AG04450 (cell line): ENCODE measurements at regions of chr17 and their contacts with region 1.

Region 1: GRCh38 chr17:4215882-4216570 is 47.8 kb downstream of the ANKFY1 start:
- DNase-seq: no peak
- H3K4me3 ChIP-seq: no peak overlapping the region
- H3K27ac ChIP-seq: no peak overlapping the region
- H3K27me3 ChIP-seq: no peaks in the 10 kb centered on the region
- CTCF ChIP-seq: no peak

Region 2: DNA sequence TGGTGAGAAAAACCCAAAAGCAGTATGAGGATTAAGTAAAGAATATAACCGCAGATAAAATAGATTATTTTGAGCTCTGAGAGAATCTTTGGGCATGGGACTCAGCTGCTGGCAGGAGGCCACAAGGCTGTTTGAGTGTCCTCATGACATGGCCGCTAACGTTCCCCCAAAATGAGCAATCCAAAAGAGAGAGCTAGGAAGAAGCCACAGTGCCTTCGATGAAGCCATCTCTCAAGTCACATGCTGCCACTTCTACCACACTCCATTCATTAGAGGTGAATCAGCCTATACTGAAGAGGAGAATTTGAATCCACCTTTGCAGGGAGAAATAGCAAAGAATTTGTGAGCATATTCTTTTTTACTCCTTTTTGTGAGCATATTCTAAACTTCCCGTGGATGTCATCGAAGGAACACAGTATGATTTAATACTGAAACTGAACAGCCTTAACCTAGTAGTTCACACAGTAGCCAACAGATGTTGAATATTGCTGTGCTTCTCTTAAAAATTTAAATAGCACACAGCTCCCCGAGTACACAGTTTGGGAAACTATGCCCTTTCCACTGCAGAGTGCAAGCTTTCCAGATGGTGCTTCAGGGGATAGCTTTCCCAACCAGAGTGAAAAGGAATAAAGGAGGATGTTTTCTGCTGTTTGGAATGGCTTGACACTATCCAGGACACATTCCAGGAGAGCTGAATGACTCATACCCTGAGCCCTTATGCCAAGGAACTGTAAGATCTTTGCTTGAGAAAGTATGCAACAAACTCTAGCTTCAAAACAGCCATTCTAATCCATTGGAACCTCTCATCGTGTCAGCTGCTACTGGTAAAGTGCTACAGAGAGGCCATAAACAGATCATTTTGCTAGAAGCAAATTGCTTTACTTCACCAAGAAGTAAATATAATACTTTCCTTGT is 13.9 kb after region 1 on chr17:
- CTCF ChIA-PET with region 1: interaction called, 11 read pairs
- POLR2A ChIA-PET with region 1: no interaction called
- DNase-seq: peak; percentile 93
- H3K4me3 ChIP-seq: peak overlapping the region; percentile 35
- H3K27ac ChIP-seq: peak overlapping the region; percentile 85
- H3K27me3 ChIP-seq: no peaks in the 10 kb centered on the region
- CTCF ChIP-seq: no peak

Region 3: DNA sequence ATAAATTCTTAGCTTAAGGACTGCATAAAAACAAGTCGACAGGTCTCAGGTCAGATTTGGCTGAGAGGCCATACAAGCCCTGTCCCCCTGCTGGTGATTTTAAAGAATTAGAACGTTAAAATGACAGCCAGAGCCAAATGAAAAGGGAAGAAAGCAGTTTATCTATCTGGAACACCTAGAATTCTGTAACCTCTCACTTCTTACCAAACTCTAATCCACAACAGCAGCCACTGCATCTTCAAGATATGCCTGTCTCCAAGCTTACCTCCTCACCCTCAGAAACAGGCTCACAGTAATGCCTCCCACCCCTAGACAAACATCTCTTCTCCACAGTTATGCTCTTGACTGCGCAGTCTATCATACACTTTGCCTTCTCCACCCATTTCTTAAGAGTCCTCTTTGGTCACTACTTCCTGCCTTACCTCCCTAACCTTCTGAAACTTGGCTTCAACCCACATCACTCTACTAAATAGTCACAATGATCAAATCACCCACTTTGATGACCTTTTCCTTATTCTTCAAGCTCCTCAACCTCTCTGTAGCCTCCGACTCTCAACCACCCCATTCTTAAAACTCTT is 33.5 kb after region 1 on chr17:
- CTCF ChIA-PET with region 1: interaction called, 35 read pairs
- POLR2A ChIA-PET with region 1: no interaction called
- DNase-seq: no peak
- H3K4me3 ChIP-seq: no peak overlapping the region
- H3K27ac ChIP-seq: no peak overlapping the region
- H3K27me3 ChIP-seq: no peaks in the 10 kb centered on the region
- CTCF ChIP-seq: peak; percentile 63

Region 4: DNA sequence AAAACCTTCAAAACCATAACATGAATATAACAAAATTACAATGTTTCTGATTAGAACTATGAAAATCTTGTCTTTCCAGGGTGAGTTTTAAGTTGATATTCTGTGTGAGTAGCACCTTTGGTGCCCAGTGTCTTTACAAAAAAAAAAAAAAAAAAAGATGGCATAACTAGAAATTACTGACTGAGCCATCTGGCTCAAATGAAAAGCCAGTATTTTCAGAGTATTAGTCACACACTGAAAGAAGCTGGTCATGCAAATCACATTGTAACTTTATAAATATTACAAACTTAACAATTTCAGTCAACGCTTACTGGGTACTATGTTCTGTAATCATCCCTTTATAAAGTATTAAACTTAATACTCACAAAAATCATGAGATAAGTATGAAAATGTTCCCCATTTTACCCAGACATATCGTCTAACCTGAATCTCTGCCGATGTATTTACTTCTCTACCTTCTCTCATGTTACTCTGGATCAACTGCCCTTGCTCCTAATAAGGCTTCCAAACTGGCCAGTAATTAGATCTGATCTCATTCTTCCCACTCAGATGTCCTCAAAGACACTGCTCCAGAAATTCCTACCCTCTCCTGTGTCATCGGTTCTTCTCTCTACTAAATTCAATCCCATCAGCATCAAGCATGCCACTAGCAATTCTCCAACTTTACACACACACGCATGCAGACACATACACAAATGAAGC is 125.0 kb after region 1 on chr17:
- CTCF ChIA-PET with region 1: interaction called, 10 read pairs
- POLR2A ChIA-PET with region 1: no interaction called
- DNase-seq: no peak
- H3K4me3 ChIP-seq: no peak overlapping the region
- H3K27ac ChIP-seq: no peak overlapping the region
- H3K27me3 ChIP-seq: no peaks in the 10 kb centered on the region
- CTCF ChIP-seq: no peak

Region 5: GRCh38 chr17:4407851-4408250 is 191.8 kb after region 1 on chr17:
- CTCF ChIA-PET with region 1: interaction called, 69 read pairs
- POLR2A ChIA-PET with region 1: interaction called, 3 read pairs
- DNase-seq: no peak
- H3K4me3 ChIP-seq: no peak overlapping the region
- H3K27ac ChIP-seq: no peak overlapping the region
- H3K27me3 ChIP-seq: no peaks in the 10 kb centered on the region
- CTCF ChIP-seq: no peak

Region 6: DNA sequence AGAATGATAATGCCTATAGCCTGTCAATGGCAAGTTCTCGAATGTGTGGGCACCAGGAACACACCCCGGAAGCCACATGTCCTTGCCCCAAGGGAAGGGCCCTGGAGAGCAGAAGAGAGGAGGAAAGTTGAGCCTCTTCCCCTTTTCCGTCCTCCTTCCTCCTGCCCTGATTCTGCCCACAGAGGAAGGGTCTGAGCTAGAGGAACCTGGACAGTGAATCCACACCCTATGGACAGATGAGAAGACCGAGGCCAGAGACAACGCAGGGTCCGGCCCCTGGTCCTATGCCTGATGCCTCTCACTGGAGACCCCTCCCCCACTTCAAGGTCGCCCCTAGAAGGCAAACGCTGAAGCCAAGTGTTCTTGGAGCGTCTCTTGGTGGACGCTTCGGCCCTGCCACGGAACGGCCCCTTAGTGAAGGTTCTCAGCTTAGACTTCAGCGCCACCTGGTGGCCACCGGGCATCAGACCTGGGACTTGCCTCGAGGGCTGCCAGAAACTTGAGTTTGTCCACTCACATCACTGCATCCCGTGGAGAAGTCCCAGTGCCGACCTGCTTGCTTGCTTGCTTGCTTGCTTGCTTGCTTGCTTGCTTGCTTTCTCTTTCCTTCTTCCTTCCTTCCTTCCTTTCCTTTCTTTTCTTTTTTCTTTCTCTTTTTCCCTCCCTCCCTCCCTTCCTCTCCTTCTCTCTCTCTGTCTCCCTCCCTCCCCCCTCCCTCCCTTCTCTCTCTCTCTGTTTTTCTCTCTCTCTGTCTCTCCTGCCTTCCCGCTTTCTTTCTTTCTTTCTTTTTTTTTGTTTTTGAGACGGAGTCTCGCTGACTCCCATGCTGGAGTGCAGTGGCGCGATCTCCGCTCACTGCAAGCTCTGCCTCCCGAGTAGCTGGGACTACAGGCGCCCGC is 197.2 kb after region 1 on chr17:
- CTCF ChIA-PET with region 1: interaction called, 69 read pairs
- POLR2A ChIA-PET with region 1: interaction called, 3 read pairs
- DNase-seq: peak; percentile 79
- H3K4me3 ChIP-seq: no peak overlapping the region
- H3K27ac ChIP-seq: no peak overlapping the region
- H3K27me3 ChIP-seq: no peaks in the 10 kb centered on the region
- CTCF ChIP-seq: peak; percentile 87